Mammary epithelial cell (primary cell): ENCODE measurements at regions of chr3 and their contacts with region 1.

Region 1: DNA sequence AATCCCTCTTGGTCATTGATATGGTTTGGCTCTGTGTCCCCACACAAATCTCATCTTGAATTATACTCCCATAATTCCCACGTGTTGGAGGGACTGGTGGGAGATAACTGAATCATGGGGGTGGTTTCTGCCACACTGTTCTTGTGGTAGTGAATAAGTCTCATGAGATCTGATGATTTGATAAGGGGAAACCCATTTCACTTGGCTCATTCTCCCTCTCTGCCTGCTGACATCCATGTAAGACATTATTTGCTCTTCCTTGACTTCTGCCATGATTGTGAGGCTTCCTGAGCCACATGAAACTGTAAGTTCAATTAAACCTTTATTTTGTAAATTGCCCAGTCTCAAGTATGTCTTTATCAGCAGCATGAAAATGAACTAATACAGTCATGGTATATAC is 106.9 kb upstream of the UBP1 start:
- DNase-seq: peak; percentile 2
- H3K4me3 ChIP-seq: no peak overlapping the region
- H3K27ac ChIP-seq: no peak overlapping the region
- H3K4me1 ChIP-seq: no peaks in the 10 kb centered on the region
- H3K27me3 ChIP-seq: no peaks in the 10 kb centered on the region
- CTCF ChIP-seq: no peak

Region 2: GRCh38 chr3:33612607-33613006 is 65.5 kb after region 1 on chr3:
- CTCF ChIA-PET with region 1: interaction called, 21 read pairs
- dilution Hi-C with region 1: no loop called
- in situ Hi-C with region 1: no loop called
- intact Hi-C with region 1: no loop called
- DNase-seq: peak; percentile 2
- H3K4me3 ChIP-seq: no peak overlapping the region
- H3K27ac ChIP-seq: no peak overlapping the region
- H3K4me1 ChIP-seq: no peaks in the 10 kb centered on the region
- H3K27me3 ChIP-seq: no peaks in the 10 kb centered on the region
- CTCF ChIP-seq: no peak

Region 3: GRCh38 chr3:33942483-33943150 is 395.5 kb after region 1 on chr3:
- CTCF ChIA-PET with region 1: no interaction called
- dilution Hi-C with region 1: no loop called
- in situ Hi-C with region 1: no loop called
- intact Hi-C with region 1: no loop called
- DNase-seq: peak; percentile 43
- H3K4me3 ChIP-seq: no peak overlapping the region
- H3K27ac ChIP-seq: no peak overlapping the region
- H3K4me1 ChIP-seq: peaks cover 23% of the 10 kb centered on the region
- H3K27me3 ChIP-seq: no peaks in the 10 kb centered on the region
- CTCF ChIP-seq: no peak